A673 (cell line): ENCODE measurements at regions of chr12 and their contacts with region 1.

Region 1: DNA sequence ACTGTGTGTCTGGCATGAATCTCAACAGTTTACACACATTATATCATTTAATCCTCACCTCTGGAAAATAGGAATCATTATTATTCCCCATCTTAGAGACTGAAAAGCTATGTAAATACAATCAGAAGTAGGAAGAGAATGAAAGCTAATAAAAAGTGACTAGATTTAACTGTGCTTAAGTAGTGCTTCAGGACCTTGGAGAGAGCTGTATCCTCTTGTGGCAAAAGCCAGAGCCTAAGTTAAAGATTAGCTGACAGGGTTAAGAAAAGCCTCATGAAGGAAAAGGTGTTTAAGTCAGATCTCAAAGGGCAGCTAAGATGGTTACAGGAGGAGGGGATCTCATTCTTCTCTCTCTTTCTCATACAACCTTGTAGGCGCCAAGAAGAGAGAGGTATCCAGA is 65.3 kb upstream of the TMEM233 start:
- DNase-seq: peak; percentile 38
- H3K4me3 ChIP-seq: no peak overlapping the region
- H3K27ac ChIP-seq: no peak overlapping the region
- H3K4me1 ChIP-seq: no peaks in the 10 kb centered on the region
- H3K27me3 ChIP-seq: no peaks in the 10 kb centered on the region
- CTCF ChIP-seq: no peak

Region 2: DNA sequence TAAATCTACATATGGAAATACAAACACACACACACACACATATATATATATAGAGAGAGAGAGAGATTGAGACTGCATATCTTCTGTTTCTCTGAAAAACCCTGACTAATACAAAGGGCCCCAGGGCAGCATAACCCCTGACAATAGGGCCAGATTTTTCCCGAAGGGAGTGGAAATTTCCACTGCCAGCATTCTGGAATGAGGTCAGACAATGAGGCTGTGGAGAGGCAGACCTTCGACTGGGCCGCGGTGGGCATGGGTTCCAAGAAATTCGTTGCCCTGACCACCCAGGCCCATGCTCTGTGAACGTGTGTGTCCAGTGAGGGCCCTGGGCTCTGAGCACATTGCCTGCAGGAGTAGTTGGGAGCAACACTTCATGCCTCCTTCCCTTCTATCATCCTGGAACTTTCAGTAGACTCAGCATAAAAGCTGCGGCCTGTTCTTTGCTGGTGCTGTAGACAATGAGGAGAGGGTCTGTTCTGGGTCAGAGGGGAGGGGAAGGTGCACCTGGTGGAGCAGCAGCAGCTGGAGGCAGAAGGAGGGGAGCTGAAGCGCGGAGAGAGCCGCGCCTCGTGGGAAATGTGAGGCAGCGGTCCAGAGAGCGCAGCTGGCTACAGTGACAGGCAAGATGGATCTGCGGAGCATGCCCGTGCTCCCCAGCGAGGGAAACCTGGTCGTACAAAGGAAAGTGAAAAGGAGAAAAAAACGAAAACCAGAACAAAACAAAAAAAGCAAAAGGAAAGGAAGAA is 219.4 kb before region 1 on chr12:
- CTCF ChIA-PET with region 1: no interaction called
- POLR2A ChIA-PET with region 1: interaction called, 11 read pairs
- intact Hi-C with region 1: no loop called
- DNase-seq: no peak
- H3K4me3 ChIP-seq: no peak overlapping the region
- H3K27ac ChIP-seq: no peak overlapping the region
- H3K4me1 ChIP-seq: no peaks in the 10 kb centered on the region
- H3K27me3 ChIP-seq: peaks cover 47% of the 10 kb centered on the region
- CTCF ChIP-seq: no peak